H1 (cell line): ENCODE measurements at regions of chr20 and their contacts with region 1.

Region 1: DNA sequence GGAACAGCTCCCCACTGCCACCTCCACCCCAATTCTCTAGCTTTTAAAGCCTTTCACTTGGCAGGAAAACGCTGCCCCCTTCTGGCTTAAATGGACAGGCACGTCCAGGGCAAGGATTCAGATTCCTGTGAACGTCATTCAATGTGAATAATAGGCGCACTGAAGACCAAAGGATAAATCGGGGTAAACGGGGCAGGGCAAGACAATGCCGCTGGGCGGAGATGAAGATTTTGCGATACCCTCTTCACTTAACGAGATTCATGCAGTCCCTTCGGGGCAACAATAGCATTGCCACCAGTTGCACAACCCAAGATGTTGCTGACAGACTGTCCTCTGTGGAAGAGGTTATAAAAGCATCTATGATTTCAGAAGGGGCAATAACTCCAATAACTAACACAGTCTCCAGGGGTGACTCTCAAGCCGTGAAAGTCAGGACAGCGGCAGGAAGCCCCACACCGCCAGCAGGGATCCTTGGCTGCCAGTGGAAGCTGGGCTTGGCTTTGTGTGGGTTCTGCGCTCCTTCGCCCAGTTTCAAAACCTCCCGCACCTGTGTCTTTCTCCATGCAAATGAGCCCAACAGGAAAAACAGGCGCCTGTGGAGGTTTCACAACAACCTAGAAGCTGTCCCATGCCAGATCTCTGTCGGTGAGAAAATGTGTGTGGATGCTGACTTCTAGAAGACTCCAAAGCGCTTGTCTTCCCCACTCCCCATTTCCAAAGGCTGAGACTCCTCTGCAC is 291.8 kb downstream of the BMP7 start:
- DNase-seq: peak; percentile 38 to 84
- H3K4me3 ChIP-seq: peak overlapping the region in 3 of 4 experiments; percentile 7 to 30 (median 10); a peak in 4 of 8 replicates
- H3K27ac ChIP-seq: no peak overlapping the region
- H3K4me1 ChIP-seq: peaks cover 21 to 30% (median 27%) of the 10 kb centered on the region in 4 experiments
- H3K27me3 ChIP-seq: peaks cover 0 to 8% (median 5%) of the 10 kb centered on the region in 4 experiments; a peak in 4 of 7 replicates
- CTCF ChIP-seq: peak; percentile 70 to 88 (median 88)
- EP300 ChIP-seq: no peak
- POLR2A ChIP-seq: no peak
- RAD21 ChIP-seq: peak; percentile 91 to 95

Region 2: GRCh38 chr20:56554869-56555268 is 419.8 kb before region 1 on chr20:
- CTCF ChIA-PET with region 1: interaction called, 18 read pairs
- POLR2A ChIA-PET with region 1: no interaction called
- DNase-seq: no peak
- H3K4me3 ChIP-seq: no peak overlapping the region
- H3K27ac ChIP-seq: no peak overlapping the region
- H3K4me1 ChIP-seq: peaks cover 0 to 2% (median 0%) of the 10 kb centered on the region in 4 experiments; a peak in 1 of 7 replicates
- H3K27me3 ChIP-seq: no peaks in the 10 kb centered on the region
- CTCF ChIP-seq: no peak
- EP300 ChIP-seq: no peak
- POLR2A ChIP-seq: no peak
- RAD21 ChIP-seq: no peak

Region 3: GRCh38 chr20:56859801-56860261 is 114.8 kb before region 1 on chr20:
- CTCF ChIA-PET with region 1: interaction called, 14 read pairs
- POLR2A ChIA-PET with region 1: no interaction called
- DNase-seq: peak in 1 of 2 experiments; percentile 56
- H3K4me3 ChIP-seq: peak overlapping the region in 3 of 4 experiments; percentile 13 to 46 (median 23); a peak in 4 of 8 replicates
- H3K27ac ChIP-seq: no peak overlapping the region
- H3K4me1 ChIP-seq: peaks cover 0 to 23% (median 17%) of the 10 kb centered on the region in 4 experiments; a peak in 5 of 7 replicates
- H3K27me3 ChIP-seq: peaks cover 0 to 12% (median 0%) of the 10 kb centered on the region in 4 experiments; a peak in 4 of 7 replicates
- CTCF ChIP-seq: no peak
- EP300 ChIP-seq: no peak
- POLR2A ChIP-seq: 0 out of 3 replicates have a peak, but pooled peaks of 1 of the 2 experiments have one; percentile 20
- RAD21 ChIP-seq: no peak

Region 4: GRCh38 chr20:56928007-56928406 is 46.7 kb before region 1 on chr20:
- CTCF ChIA-PET with region 1: interaction called, 12 read pairs
- POLR2A ChIA-PET with region 1: no interaction called
- DNase-seq: no peak
- H3K4me3 ChIP-seq: peak overlapping the region in 3 of 4 experiments; percentile 10 to 44 (median 11); a peak in 4 of 8 replicates
- H3K27ac ChIP-seq: no peak overlapping the region
- H3K4me1 ChIP-seq: peaks cover 1 to 29% (median 17%) of the 10 kb centered on the region in 4 experiments; a peak in 6 of 7 replicates
- H3K27me3 ChIP-seq: peaks cover 17 to 43% (median 38%) of the 10 kb centered on the region in 4 experiments
- CTCF ChIP-seq: no peak
- EP300 ChIP-seq: no peak
- POLR2A ChIP-seq: no peak
- RAD21 ChIP-seq: no peak

Region 5: GRCh38 chr20:56987989-56988388 is 13.3 kb after region 1 on chr20:
- CTCF ChIA-PET with region 1: interaction called, 74 read pairs
- POLR2A ChIA-PET with region 1: no interaction called
- DNase-seq: no peak
- H3K4me3 ChIP-seq: no peak overlapping the region
- H3K27ac ChIP-seq: no peak overlapping the region
- H3K4me1 ChIP-seq: peaks cover 0 to 4% (median 0%) of the 10 kb centered on the region in 4 experiments; a peak in 1 of 7 replicates
- H3K27me3 ChIP-seq: no peaks in the 10 kb centered on the region; a peak in 1 of 7 replicates
- CTCF ChIP-seq: no peak
- EP300 ChIP-seq: no peak
- POLR2A ChIP-seq: no peak
- RAD21 ChIP-seq: no peak

Region 6: GRCh38 chr20:57013718-57014117 is 39.0 kb after region 1 on chr20:
- CTCF ChIA-PET with region 1: no interaction called
- POLR2A ChIA-PET with region 1: no interaction called
- DNase-seq: peak in 1 of 2 experiments; percentile 71
- H3K4me3 ChIP-seq: peak overlapping the region in 1 of 4 experiments; percentile 37; a peak in 3 of 8 replicates
- H3K27ac ChIP-seq: no peak overlapping the region
- H3K4me1 ChIP-seq: peaks cover 2 to 3% (median 2%) of the 10 kb centered on the region in 4 experiments; a peak in 6 of 7 replicates
- H3K27me3 ChIP-seq: peaks cover 0 to 3% (median 2%) of the 10 kb centered on the region in 4 experiments; a peak in 5 of 7 replicates
- CTCF ChIP-seq: no peak
- EP300 ChIP-seq: no peak
- POLR2A ChIP-seq: no peak
- RAD21 ChIP-seq: no peak

Region 7: GRCh38 chr20:57102566-57103451 is 128.1 kb after region 1 on chr20:
- CTCF ChIA-PET with region 1: no interaction called
- POLR2A ChIA-PET with region 1: no interaction called
- DNase-seq: no peak
- H3K4me3 ChIP-seq: no peak overlapping the region
- H3K27ac ChIP-seq: no peak overlapping the region
- H3K4me1 ChIP-seq: no peaks in the 10 kb centered on the region
- H3K27me3 ChIP-seq: no peaks in the 10 kb centered on the region
- CTCF ChIP-seq: no peak
- EP300 ChIP-seq: no peak
- POLR2A ChIP-seq: no peak
- RAD21 ChIP-seq: no peak